ENCODE measurements at regions of chr22 and their contacts with region 1.

Region 1: DNA sequence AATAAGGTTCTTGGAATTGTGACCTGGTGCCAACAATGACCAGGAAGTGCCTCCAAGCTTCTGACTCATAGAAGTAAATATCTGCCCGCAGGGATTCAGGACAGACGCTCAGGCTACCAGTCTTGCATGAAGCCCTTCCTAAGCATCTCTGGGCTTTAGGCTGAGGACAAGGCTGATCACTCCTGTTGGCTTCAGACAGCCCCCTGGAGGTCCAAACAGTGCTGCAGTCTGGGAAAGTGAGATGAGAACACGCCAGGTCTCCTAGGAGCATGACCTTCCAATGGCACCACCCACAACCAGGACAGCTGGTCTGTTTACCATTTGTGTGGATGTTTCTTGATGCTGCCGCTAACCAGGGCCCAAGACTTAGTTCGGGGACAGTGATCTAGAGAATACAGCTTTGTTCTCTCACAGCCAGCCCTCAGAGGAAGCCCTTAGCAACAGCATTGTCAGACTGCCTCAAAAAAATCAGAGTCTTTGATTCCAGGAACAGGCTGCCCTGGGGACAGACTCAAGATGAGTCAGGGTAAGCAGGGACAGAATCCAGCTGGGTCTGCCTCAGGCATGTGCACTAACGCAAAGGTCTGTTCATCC is 111.2 kb downstream of the ZNF280B start:
- DNase-seq: peak; percentile 21
- H3K4me3 ChIP-seq: no peak overlapping the region
- H3K27ac ChIP-seq: no peak overlapping the region
- H3K4me1 ChIP-seq: peaks cover 11% of the 10 kb centered on the region
- H3K27me3 ChIP-seq: no peaks in the 10 kb centered on the region
- CTCF ChIP-seq: peak in 1 of 2 donors; percentile 9

Region 2: DNA sequence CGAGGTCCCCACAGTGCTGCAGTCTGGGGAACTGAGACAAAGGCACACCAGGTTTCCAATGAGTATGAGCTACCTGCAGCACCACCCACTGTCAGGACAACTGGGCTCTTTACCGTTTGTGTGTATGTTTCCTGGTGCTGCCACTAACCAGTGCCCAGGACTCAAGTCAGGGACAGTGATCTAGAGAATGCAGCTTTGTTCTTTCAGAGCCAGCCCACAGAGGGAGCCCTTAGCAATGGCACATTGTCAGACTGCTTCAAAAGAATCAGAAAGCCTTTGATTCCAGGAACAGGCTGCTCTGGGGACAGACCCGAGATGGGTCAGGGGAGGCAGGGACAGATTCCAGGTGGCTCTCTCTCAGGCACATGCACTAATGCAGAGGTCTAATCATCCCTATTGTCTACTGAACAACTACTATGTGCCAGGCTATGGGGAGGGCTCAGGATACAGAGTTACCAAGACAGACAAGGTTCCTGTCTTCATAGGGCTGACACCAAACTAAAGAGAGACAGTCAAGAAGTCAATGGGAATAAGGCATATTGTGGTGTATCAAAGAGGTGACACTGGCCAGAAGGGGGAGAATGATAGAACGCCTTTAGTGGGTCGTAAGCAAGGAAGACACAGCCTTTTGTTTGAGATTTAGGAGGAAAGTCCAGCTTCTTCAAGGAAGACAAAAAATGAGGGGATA is 49.1 kb before region 1 on chr22:
- CTCF ChIA-PET with region 1: no interaction called
- dilution Hi-C with region 1: no loop called
- in situ Hi-C with region 1: loop called in 1 of 2 experiments (anchors 5 kb)
- intact Hi-C with region 1: loop called (anchors 1 kb)
- DNase-seq: no peak
- H3K4me3 ChIP-seq: no peak overlapping the region
- H3K27ac ChIP-seq: no peak overlapping the region
- H3K4me1 ChIP-seq: no peaks in the 10 kb centered on the region
- H3K27me3 ChIP-seq: no peaks in the 10 kb centered on the region
- CTCF ChIP-seq: peak in 1 of 2 donors; percentile 34

Measured in mammary epithelial cell (primary cell).